ENCODE measurements at regions of chr2 and their contacts with region 1.

Region 1: DNA sequence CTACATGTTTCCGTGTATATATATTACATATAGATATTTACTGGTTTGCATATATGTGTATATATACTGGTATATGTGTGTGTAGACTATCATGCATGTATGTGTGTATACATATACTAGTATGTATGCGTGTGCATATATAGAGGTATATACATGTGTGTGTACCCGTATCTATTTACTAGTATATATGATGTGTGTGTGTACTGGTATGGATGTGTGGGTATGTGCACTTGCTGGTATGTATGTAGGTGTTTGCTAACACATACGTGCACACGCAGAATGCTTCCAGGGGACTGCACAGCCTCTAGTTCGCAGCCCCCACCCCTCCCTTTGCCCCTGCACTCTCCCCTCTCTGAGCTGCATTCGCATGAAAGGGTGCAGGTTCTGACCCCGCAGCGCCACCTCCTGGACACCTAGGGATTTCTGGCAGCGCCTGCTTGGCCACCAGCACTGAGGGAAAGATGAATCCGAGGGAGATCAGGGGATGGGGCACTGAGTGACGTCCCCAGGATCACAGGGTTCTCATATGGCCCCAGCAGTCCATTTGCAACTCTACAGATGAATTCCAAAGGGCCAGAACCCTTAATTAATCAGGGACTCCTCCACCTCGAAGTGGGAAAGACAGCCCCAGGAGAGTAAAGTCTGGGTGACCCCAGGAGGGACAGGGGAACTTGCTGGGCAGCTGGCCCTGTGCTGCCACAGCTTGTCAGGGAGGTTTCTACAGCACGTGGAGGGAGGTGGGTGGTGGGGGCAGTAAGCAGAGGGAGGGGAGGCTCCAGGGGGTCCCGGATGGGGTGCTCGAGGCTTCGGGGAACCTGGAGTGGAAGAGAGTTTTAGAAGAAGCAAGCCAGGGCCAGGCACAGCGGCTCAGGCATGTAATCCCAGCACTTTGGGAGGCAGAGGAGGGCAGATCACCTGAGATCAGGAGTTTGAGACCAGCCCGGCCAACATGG is 66.8 kb upstream of the ASAP2 start:
- DNase-seq: peak; percentile 81
- H3K4me3 Mint-ChIP-seq: no peak overlapping the region
- H3K27ac Mint-ChIP-seq: no peak overlapping the region
- H3K4me1 Mint-ChIP-seq: no peaks in the 10 kb centered on the region
- H3K27me3 Mint-ChIP-seq: peaks cover 43% of the 10 kb centered on the region

Region 2: GRCh38 chr2:8872821-8873432 is 266.8 kb before region 1 on chr2:
- CTCF ChIA-PET with region 1: interaction called, 12 read pairs
- DNase-seq: no peak
- H3K4me3 Mint-ChIP-seq: no peak overlapping the region
- H3K27ac Mint-ChIP-seq: no peak overlapping the region
- H3K4me1 Mint-ChIP-seq: no peaks in the 10 kb centered on the region
- H3K27me3 Mint-ChIP-seq: peaks cover 3% of the 10 kb centered on the region

Region 3: GRCh38 chr2:9050122-9050809 is 89.5 kb before region 1 on chr2:
- CTCF ChIA-PET with region 1: no interaction called
- DNase-seq: no peak
- H3K4me3 Mint-ChIP-seq: no peak overlapping the region
- H3K27ac Mint-ChIP-seq: no peak overlapping the region
- H3K4me1 Mint-ChIP-seq: peaks cover 2% of the 10 kb centered on the region
- H3K27me3 Mint-ChIP-seq: peaks cover 4% of the 10 kb centered on the region

Region 4: DNA sequence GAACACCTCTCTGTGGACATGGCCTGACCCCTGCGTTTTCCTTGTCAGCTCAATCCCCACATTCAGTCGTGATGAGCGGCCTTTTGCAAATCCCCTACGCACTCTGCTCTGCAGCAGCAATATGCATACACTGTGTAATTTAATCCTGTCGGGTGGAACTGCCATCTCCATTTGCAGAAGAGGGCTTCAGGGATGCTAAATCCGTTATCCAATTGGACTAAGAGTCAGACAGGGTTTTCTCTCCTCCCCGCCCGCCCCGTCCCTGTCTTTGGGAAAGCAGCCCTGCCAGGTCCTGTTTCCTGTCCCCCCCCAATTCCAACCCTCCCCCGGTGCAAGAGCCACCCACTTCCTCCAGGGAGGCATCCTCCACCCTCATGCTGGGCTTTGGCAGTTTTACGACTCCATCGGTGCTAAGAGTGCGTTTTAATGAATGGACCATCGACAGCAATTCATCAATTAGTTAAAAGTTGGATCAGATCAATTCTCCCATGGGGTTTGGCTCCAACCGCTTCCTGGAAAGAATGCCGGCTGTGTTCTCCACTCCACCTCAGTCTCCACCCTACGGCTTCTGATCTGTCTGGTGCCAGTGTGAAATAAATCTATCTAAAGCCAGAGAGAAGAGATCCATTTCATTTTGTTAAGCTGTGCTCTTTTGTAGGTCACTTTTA is 13.3 kb after region 1 on chr2:
- CTCF ChIA-PET with region 1: no interaction called
- DNase-seq: no peak
- H3K4me3 Mint-ChIP-seq: no peak overlapping the region
- H3K27ac Mint-ChIP-seq: no peak overlapping the region
- H3K4me1 Mint-ChIP-seq: no peaks in the 10 kb centered on the region
- H3K27me3 Mint-ChIP-seq: peaks cover 55% of the 10 kb centered on the region